HepG2 (cell line): ENCODE measurements at regions of chr16 and their contacts with region 1.

Region 1: GRCh38 chr16:48526058-48526957 is 83.7 kb downstream of the N4BP1 start:
- DNase-seq: peak; percentile 85
- ATAC-seq: peak; percentile 88
- H3K4me3 ChIP-seq: peak overlapping the region; percentile 47 to 68 (median 52)
- H3K27ac ChIP-seq: peak overlapping the region; percentile 52
- H3K4me1 ChIP-seq: peaks cover 61% of the 10 kb centered on the region
- H3K27me3 ChIP-seq: no peaks in the 10 kb centered on the region; a peak in 1 of 5 replicates
- CTCF ChIP-seq: peak; percentile 98
- EP300 ChIP-seq: peak in 1 of 2 experiments; percentile 73; a peak in 1 of 4 replicates
- POLR2A ChIP-seq: no peak; a peak in 1 of 4 replicates
- RAD21 ChIP-seq: peak; percentile 93

Region 2: DNA sequence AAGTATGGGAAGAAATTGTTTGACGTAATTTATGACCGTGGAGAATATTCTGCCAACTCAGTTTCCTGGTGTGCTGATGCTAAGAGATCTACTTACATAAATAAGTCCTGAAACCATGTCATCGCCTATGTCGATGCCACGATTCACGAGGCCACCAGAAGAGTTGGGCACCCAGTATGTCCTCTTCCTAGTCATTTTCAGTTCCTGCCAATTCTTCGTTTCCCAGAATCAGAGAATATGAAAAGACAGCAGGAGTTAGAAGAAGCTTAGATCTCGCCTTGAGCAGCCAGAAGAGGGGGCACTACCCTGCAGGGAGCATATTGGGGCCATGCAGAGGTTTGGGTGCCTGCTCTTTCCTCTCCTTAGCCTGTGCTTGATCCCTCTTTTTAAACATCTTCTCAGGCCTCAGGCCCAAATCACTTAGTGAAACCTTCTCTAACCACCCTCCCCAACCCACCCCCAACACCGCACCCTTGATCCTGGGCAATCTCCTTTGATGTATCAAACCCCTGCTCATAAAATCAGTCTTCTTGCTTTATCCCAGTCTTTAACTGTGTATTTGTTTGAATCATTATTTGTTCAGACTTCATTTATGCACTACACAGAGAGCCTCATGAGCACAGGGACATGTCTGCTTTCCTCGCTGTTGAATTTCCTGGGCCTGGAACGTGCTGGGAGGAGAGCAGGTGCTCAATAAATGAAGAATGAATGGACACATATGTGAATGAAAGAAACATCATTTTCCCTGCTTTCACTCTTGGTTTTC is 294.4 kb before region 1 on chr16:
- CTCF ChIA-PET with region 1: interaction called, 3 read pairs
- POLR2A ChIA-PET with region 1: interaction called, 3 read pairs
- in situ Hi-C with region 1: no loop called
- intact Hi-C with region 1: loop called (anchors 5 kb)
- DNase-seq: peak; percentile 49
- ATAC-seq: peak; percentile 60
- H3K4me3 ChIP-seq: no peak overlapping the region
- H3K27ac ChIP-seq: no peak overlapping the region
- H3K4me1 ChIP-seq: peaks cover 65% of the 10 kb centered on the region
- H3K27me3 ChIP-seq: no peaks in the 10 kb centered on the region
- CTCF ChIP-seq: peak; percentile 76
- EP300 ChIP-seq: no peak
- POLR2A ChIP-seq: no peak
- RAD21 ChIP-seq: peak; percentile 76

Region 3: DNA sequence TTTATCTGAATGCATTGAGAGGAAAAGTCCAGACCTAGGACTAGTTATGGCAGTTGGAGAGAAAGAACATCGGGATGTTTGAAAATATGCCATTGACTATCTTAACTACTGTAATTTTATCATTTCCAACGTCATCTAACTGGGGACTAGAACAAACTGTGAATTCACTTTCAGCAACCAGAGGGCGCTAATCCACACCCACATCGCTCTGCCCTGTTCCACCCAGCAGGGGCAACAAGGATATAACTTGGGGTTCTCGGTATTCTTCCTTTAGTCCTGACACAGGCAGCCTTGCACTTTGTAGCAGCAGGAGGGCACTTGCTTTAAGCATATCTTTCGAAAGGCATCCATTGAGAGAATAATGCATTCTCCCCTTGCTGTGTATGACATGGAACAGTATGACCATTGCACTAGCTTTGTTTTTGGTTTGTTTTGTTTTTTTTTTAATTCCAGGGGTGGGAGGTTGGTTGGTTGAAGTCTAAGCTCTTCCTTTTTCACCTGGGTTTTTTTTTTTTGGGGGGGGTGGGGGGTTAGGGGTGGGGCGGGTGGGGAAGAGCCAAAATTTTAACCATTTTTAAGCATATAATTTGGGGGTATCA is 172.6 kb before region 1 on chr16:
- CTCF ChIA-PET with region 1: interaction called, 38 read pairs
- POLR2A ChIA-PET with region 1: interaction called, 6 read pairs
- in situ Hi-C with region 1: loop called (anchors 5 kb)
- intact Hi-C with region 1: loop called (anchors 1 kb)
- DNase-seq: peak; percentile 78
- ATAC-seq: peak; percentile 89
- H3K4me3 ChIP-seq: no peak overlapping the region
- H3K27ac ChIP-seq: no peak overlapping the region
- H3K4me1 ChIP-seq: no peaks in the 10 kb centered on the region
- H3K27me3 ChIP-seq: no peaks in the 10 kb centered on the region
- CTCF ChIP-seq: peak; percentile 90
- EP300 ChIP-seq: no peak
- POLR2A ChIP-seq: peak in 1 of 2 experiments; percentile 35; a peak in 1 of 4 replicates
- RAD21 ChIP-seq: peak; percentile 90

Region 4: DNA sequence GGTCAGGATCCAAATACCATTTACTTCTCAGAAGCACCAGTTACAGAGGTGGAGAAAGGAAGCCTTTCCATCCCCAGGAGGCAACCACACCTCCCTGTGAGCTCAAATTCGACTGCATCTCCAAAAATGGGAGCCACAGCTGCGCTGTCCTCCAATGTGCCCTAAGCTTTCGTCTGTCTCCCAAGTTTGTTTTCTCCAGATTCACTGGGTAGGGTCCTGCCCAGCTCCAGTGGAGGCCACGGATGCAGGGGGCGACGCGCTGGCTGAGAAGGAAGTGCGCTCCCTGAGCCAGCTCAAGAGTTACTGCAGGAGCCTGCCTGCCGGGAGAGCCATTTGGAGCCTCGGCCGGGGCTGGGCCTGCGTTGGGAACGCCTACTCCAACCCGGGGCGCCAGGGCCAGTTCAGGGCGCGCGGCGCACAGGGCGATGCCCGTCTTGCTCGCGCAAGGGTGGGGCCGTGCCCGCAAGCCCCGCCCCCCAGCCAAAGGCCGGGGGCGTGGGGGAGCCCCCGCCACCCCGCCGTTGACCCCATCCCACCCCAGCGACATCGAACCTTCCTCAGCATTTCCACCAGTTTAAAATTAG is 160.6 kb before region 1 on chr16:
- CTCF ChIA-PET with region 1: no interaction called
- POLR2A ChIA-PET with region 1: interaction called, 16 read pairs
- in situ Hi-C with region 1: no loop called
- intact Hi-C with region 1: loop called (anchors 1 kb)
- DNase-seq: peak; percentile 83
- ATAC-seq: peak; percentile 99
- H3K4me3 ChIP-seq: peak overlapping the region; percentile 72 to 87 (median 75)
- H3K27ac ChIP-seq: peak overlapping the region; percentile 81
- H3K4me1 ChIP-seq: peaks cover 45% of the 10 kb centered on the region
- H3K27me3 ChIP-seq: no peaks in the 10 kb centered on the region; a peak in 1 of 5 replicates
- CTCF ChIP-seq: peak; percentile 53
- EP300 ChIP-seq: no peak
- POLR2A ChIP-seq: peak; percentile 93 to 96
- RAD21 ChIP-seq: no peak

Region 5: GRCh38 chr16:48385272-48386150 is 140.8 kb before region 1 on chr16 and contains the start of gene SIAH1:
- CTCF ChIA-PET with region 1: no interaction called
- POLR2A ChIA-PET with region 1: interaction called, 15 read pairs
- in situ Hi-C with region 1: no loop called
- intact Hi-C with region 1: no loop called
- DNase-seq: peak; percentile 71
- ATAC-seq: peak; percentile 69
- H3K4me3 ChIP-seq: peak within 1 kb of the TSS; percentile 85 to 91 (median 85)
- H3K27ac ChIP-seq: peak within 1 kb of the TSS; percentile 92
- H3K4me1 ChIP-seq: peaks cover 52% of the 10 kb centered on the region
- H3K27me3 ChIP-seq: no peaks in the 10 kb centered on the region; a peak in 2 of 5 replicates
- CTCF ChIP-seq: 0 out of 2 replicates have a peak, but pooled peaks have one; percentile 19
- EP300 ChIP-seq: no peak; a peak in 1 of 4 replicates
- POLR2A ChIP-seq: peak; percentile 86 to 94
- RAD21 ChIP-seq: peak; percentile 61; the same call in 1 of the 2 replicates
- total RNA-seq, gene SIAH1: 27.9 and 28.6 TPM in 2 replicates

Region 6: DNA sequence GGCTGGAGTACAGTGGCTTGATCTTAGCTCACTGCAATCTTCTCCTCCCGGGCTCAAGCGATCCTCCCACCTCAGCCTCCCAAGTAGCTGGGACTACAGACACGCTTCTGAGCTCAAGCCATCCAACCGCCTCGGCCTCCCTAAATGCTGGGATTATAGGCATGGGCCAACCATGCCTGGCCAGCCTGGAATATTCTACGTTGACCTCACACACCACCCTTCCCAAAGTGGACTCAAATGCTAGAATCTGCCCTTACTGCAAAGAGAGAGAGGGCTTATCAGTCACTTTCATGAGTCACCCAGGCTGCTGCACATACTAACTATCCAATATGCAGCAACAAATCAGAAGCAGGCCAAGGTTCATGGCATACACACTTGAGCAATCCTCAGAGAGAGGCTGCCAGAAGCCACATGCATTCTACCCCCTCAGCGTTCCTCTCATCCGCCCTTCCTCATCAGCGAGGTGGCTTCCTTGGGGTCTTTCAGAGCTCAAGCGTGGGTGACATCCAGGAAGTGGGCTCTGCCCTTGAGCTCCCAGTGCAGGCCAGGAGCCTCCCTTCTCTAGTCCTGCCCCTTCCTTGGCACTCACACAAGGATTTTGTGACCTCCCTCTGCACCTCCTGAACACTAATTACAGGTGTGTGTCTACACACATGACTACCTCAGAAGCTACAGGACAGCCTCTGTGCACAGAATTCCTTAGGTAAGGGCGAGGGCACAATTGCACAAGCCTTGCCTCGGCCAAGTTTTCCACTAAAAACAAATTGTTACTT is 116.3 kb before region 1 on chr16:
- CTCF ChIA-PET with region 1: no interaction called
- POLR2A ChIA-PET with region 1: no interaction called
- in situ Hi-C with region 1: no loop called
- intact Hi-C with region 1: loop called (anchors 1 kb)
- DNase-seq: peak; percentile 93
- ATAC-seq: peak; percentile 96
- H3K4me3 ChIP-seq: peak overlapping the region in 2 of 3 experiments; percentile 2 to 47; a peak in 2 of 6 replicates
- H3K27ac ChIP-seq: no peak overlapping the region
- H3K4me1 ChIP-seq: peaks cover 51% of the 10 kb centered on the region
- H3K27me3 ChIP-seq: peaks cover 2 to 3% of the 10 kb centered on the region in 2 experiments; a peak in 1 of 5 replicates
- CTCF ChIP-seq: no peak
- EP300 ChIP-seq: peak; percentile 76 to 78; a peak in 3 of 4 replicates
- POLR2A ChIP-seq: no peak
- RAD21 ChIP-seq: peak; percentile 12; the same call in 1 of the 2 replicates

Region 7: GRCh38 chr16:48444574-48444973 is 81.7 kb before region 1 on chr16:
- CTCF ChIA-PET with region 1: no interaction called
- POLR2A ChIA-PET with region 1: no interaction called
- in situ Hi-C with region 1: no loop called
- intact Hi-C with region 1: loop called (anchors 5 kb)
- DNase-seq: no peak
- ATAC-seq: no peak
- H3K4me3 ChIP-seq: no peak overlapping the region
- H3K27ac ChIP-seq: no peak overlapping the region
- H3K4me1 ChIP-seq: peaks cover 80% of the 10 kb centered on the region
- H3K27me3 ChIP-seq: no peaks in the 10 kb centered on the region
- CTCF ChIP-seq: no peak
- EP300 ChIP-seq: no peak
- POLR2A ChIP-seq: no peak
- RAD21 ChIP-seq: no peak